PC-3 (cell line): ENCODE measurements at regions of chr3 and their contacts with region 1.

Region 1: GRCh38 chr3:194134757-194135528 is 1.0 kb upstream of the HES1 start:
- DNase-seq: peak; percentile 97
- ATAC-seq: peak; percentile 37
- H3K4me3 ChIP-seq: peak overlapping the region; percentile 89
- H3K27ac ChIP-seq: peak overlapping the region; percentile 67
- H3K4me1 ChIP-seq: peaks cover 58% of the 10 kb centered on the region
- H3K27me3 ChIP-seq: no peaks in the 10 kb centered on the region
- CTCF ChIP-seq: no peak

Region 2: GRCh38 chr3:193665370-193665989 is 469.5 kb before region 1 on chr3:
- CTCF ChIA-PET with region 1: no interaction called
- POLR2A ChIA-PET with region 1: interaction called, 3 read pairs
- intact Hi-C with region 1: loop called (anchors 5 kb)
- DNase-seq: peak; percentile 63
- ATAC-seq: no peak
- H3K4me3 ChIP-seq: no peak overlapping the region
- H3K27ac ChIP-seq: no peak overlapping the region
- H3K4me1 ChIP-seq: no peaks in the 10 kb centered on the region
- H3K27me3 ChIP-seq: no peaks in the 10 kb centered on the region
- CTCF ChIP-seq: peak; percentile 75

Region 3: DNA sequence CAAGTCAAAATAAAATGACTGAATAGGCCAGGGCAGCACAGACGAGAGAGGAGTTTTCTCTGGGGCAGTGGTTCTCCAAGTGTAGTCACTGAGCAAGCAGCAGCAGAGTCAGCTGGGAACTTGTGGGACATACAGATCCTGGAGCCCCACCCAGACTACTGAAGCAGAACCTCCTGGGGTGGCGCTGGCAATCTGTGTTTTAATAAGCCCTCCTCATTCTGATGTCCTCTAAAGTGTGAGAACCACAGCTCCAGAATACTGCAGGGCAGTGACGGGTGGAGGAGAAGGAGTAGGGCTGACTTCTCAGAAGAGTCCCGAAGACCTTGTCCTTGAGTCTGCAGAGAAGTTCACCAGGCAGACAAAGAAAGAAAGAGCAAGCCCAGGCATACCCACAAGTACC is 250.3 kb before region 1 on chr3:
- CTCF ChIA-PET with region 1: interaction called, 16 read pairs
- POLR2A ChIA-PET with region 1: no interaction called
- intact Hi-C with region 1: no loop called
- DNase-seq: no peak
- ATAC-seq: no peak
- H3K4me3 ChIP-seq: no peak overlapping the region
- H3K27ac ChIP-seq: no peak overlapping the region
- H3K4me1 ChIP-seq: peaks cover 29% of the 10 kb centered on the region
- H3K27me3 ChIP-seq: no peaks in the 10 kb centered on the region
- CTCF ChIP-seq: no peak

Region 4: DNA sequence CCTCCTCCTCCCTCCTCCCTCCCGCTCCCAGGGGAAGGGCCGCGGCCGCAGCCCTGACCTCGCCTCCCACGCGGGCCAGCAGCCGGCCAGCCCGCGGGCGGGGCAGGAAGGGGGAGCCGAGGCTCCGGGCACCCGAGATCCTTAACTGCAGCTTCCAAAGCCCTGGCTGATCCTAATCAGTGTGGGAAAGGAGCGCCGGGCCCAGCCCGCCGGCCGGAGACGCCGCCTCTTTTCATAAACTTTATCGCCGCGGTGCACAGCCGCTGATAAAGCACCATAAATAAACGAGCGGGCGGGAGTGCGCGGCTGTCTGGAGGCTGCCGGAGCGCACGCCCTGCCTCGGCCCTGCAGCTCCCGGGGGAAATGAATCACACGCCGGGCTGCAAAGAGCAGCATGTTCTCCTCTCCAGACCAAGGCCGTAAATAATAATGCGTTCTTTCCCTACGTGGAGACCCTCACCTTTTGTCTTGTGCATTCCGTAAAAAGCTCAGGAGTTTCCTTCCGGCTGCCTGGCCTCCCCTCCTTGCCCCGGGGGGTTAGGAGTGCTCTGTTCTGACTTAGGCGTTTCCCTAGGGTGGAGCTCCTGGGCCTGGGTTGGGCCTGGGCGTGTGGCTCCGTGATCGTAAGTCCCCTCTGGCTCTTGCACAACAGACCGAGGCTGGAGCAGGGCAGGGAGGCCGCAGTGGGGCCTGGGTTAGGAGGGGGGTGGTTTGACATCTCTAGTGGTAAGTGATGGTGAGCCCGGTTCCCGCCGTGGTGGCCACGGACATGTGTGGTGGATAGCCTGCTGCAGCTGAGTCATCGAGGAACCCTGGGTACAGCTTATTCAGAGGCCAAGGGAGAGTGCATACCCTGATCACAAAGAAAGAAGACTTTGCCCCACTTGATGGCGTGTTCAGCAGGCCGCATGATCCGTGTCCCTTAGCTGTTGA is 131.6 kb before region 1 on chr3:
- CTCF ChIA-PET with region 1: interaction called, 5 read pairs
- POLR2A ChIA-PET with region 1: interaction called, 20 read pairs
- intact Hi-C with region 1: loop called (anchors 1 kb)
- DNase-seq: peak; percentile 90
- ATAC-seq: peak; percentile 79
- H3K4me3 ChIP-seq: peak overlapping the region; percentile 56
- H3K27ac ChIP-seq: peak overlapping the region; percentile 82
- H3K4me1 ChIP-seq: peaks cover 40% of the 10 kb centered on the region
- H3K27me3 ChIP-seq: no peaks in the 10 kb centered on the region
- CTCF ChIP-seq: no peak

Region 5: GRCh38 chr3:194112120-194113106 is 22.5 kb before region 1 on chr3:
- CTCF ChIA-PET with region 1: no interaction called
- POLR2A ChIA-PET with region 1: interaction called, 10 read pairs
- intact Hi-C with region 1: no loop called
- DNase-seq: peak; percentile 92
- ATAC-seq: peak; percentile 93
- H3K4me3 ChIP-seq: peak overlapping the region; percentile 12; the same call in 1 of the 2 replicates
- H3K27ac ChIP-seq: peak overlapping the region; percentile 56
- H3K4me1 ChIP-seq: peaks cover 13% of the 10 kb centered on the region
- H3K27me3 ChIP-seq: no peaks in the 10 kb centered on the region
- CTCF ChIP-seq: no peak

Region 6: GRCh38 chr3:194224471-194225415 is 89.8 kb after region 1 on chr3:
- CTCF ChIA-PET with region 1: no interaction called
- POLR2A ChIA-PET with region 1: no interaction called
- intact Hi-C with region 1: no loop called
- DNase-seq: no peak
- ATAC-seq: no peak
- H3K4me3 ChIP-seq: no peak overlapping the region
- H3K27ac ChIP-seq: no peak overlapping the region
- H3K4me1 ChIP-seq: peaks cover 11% of the 10 kb centered on the region; the same call in 1 of the 2 replicates
- H3K27me3 ChIP-seq: no peaks in the 10 kb centered on the region
- CTCF ChIP-seq: no peak

Region 7: DNA sequence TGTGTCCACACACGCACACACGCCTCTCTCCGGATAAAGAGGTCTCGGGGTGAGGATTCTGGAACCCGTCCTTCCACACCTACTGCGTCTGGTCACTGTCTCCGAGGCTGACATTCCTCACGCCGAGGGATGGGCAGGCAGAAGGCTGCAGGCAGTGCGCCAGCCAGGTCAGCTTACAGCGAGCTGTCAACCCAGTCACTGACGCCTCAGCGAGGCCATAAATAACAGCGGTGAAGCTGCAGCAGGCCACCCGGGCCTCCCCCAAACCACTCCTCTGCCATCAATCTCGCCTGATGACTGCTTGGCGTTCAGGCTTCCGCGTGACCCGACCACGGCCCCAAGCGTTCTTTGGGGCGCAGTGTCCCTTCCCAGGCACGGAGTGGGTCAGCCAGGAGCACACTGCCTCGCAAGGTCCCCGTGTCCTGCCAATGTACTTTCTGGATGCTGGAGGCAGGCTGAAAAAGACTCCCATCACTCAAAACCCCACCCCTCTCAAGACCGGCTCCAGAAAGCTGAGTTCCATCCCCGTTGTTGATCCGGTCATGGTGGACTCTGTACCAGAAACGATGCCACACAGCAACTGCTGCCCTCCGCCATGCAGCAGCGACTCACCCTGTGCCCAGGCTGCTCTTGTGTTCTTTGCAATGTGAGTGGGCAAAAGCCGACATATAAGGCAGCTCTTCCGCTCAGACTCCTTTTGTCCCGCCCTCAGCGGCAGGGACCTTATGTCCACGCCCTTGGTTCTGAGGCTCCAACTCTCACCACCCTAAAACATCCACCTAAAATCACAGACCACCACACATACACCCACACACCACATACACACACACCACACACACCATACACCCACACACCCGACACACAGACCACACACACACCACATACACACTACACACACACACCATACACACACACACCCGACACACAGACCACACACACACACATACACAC is 189.1 kb after region 1 on chr3:
- CTCF ChIA-PET with region 1: interaction called, 4 read pairs
- POLR2A ChIA-PET with region 1: interaction called, 27 read pairs
- intact Hi-C with region 1: loop called (anchors 2 kb)
- DNase-seq: peak; percentile 96
- ATAC-seq: peak; percentile 57
- H3K4me3 ChIP-seq: peak overlapping the region; percentile 57
- H3K27ac ChIP-seq: peak overlapping the region; percentile 100
- H3K4me1 ChIP-seq: peaks cover 44% of the 10 kb centered on the region
- H3K27me3 ChIP-seq: no peaks in the 10 kb centered on the region
- CTCF ChIP-seq: no peak